ENCODE measurements at regions of chr1 and their contacts with region 1.

Region 1: DNA sequence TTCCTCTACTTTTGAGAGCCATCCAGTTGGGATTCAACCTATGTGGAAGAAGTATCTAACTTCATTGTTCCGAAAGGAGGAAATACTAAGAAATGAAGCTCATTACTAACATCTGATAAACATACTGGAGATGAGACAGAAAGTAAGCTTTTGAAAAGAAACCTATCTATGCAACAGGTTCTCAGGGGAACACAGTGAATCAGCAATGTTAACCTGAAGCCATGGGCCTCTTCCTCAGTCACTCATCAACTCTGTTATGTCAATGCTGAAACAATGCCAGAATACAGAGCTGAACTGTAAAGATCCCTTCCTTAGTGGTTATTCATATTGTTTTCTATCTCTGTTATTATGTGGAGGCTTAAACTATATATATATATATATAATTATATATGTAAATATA is 55.5 kb upstream of the ESRRG start:
- DNase-seq: no peak
- ATAC-seq: no peak

Region 2: DNA sequence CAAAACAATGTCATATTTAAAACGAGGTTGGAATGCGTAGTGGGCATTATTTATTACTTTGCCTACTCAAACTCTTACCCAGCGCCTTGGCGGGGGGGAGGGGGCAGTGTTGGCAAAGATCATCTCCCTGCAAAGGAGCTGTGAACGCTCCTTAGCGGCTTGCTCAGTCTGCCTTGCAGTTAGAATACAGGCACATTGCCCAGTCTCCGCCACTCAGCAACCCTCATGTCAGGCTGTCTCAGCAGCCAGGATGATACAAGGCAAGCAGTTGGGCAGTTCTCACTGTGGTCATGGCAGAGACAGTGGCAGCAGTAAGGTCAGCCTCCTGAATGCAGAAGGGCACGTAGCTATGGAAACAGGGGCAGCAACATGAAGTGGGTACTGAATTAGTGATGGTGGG is 1866.6 kb before region 1 on chr1:
- intact Hi-C with region 1: loop called (anchors 10 kb)
- DNase-seq: no peak
- ATAC-seq: no peak